ENCODE measurements at regions of chr1 and their contacts with region 1.

Region 1: DNA sequence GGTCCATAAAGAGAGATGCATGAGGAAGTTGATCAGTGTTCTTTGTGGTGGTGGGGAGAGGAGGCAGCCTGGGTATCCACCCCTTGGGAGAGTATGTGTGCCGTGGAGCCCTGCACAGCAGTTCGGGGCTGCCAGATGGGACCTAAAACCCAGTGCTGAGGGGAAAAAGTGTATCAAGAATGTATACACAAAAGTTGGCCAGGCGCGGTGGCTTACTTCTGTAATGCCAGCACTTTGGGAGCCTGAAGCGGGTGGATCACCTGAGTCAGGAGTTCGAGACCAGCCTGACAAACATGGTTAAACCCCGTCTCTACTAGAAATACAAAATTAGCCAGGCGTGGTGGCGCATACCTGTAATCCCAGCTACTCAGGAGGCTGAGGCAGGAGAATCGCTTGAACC is 4.1 kb upstream of the TTC4 start:
- DNase-seq: no peak
- H3K4me3 ChIP-seq: no peak overlapping the region
- H3K27ac ChIP-seq: no peak overlapping the region
- H3K27me3 ChIP-seq: peaks cover 29% of the 10 kb centered on the region
- CTCF ChIP-seq: no peak

Region 2: DNA sequence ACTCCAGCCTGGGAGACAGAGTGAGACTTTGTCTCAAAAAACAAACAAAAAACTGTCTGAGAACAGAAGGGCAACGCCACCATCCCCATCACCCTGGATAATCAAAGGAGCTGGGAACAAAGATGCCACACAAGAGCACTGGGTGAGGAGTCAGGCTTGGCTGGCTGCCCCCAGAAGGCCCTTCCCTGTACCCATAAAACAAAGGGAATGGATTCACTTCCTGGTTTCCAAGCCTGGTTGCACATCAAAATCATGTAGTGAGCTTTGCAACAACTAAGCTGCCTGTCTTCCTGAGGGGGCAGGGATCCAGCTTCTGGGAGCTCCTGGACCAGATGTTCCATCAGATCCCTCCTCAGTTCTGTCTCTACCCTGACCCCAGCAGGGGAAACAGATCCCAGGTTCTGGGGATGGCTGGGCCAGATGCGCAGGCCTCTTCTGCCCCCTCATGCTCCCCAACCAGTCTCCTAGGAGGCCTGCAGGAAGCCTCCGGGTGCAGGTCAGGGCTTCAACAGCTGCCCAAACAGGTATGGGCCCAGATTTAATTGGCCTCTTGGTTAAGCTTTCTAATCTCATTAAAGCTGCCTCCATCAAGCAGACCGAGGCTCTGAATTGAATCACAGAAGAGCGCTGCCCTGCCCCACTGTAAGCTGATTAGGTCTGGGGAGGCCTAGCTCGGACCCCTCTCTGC is 413.8 kb before region 1 on chr1:
- CTCF ChIA-PET with region 1: no interaction called
- POLR2A ChIA-PET with region 1: no interaction called
- DNase-seq: no peak
- H3K4me3 ChIP-seq: no peak overlapping the region
- H3K27ac ChIP-seq: no peak overlapping the region
- H3K27me3 ChIP-seq: no peaks in the 10 kb centered on the region
- CTCF ChIP-seq: no peak

Region 3: GRCh38 chr1:54774820-54775498 is 63.4 kb after region 1 on chr1:
- CTCF ChIA-PET with region 1: interaction called, 10 read pairs
- POLR2A ChIA-PET with region 1: no interaction called
- DNase-seq: no peak
- H3K4me3 ChIP-seq: no peak overlapping the region
- H3K27ac ChIP-seq: no peak overlapping the region
- H3K27me3 ChIP-seq: peaks cover 26% of the 10 kb centered on the region
- CTCF ChIP-seq: no peak

Measured in AG04450 (cell line).